Mammary epithelial cell (primary cell): ENCODE measurements at regions of chr17 and their contacts with region 1.

Region 1: GRCh38 chr17:49031965-49032928 is 35.1 kb downstream of the IGF2BP1 start:
- DNase-seq: peak; percentile 59
- H3K4me3 ChIP-seq: no peak overlapping the region
- H3K27ac ChIP-seq: no peak overlapping the region
- H3K4me1 ChIP-seq: peaks cover 11% of the 10 kb centered on the region
- H3K27me3 ChIP-seq: no peaks in the 10 kb centered on the region
- CTCF ChIP-seq: peak; percentile 87 to 90

Region 2: DNA sequence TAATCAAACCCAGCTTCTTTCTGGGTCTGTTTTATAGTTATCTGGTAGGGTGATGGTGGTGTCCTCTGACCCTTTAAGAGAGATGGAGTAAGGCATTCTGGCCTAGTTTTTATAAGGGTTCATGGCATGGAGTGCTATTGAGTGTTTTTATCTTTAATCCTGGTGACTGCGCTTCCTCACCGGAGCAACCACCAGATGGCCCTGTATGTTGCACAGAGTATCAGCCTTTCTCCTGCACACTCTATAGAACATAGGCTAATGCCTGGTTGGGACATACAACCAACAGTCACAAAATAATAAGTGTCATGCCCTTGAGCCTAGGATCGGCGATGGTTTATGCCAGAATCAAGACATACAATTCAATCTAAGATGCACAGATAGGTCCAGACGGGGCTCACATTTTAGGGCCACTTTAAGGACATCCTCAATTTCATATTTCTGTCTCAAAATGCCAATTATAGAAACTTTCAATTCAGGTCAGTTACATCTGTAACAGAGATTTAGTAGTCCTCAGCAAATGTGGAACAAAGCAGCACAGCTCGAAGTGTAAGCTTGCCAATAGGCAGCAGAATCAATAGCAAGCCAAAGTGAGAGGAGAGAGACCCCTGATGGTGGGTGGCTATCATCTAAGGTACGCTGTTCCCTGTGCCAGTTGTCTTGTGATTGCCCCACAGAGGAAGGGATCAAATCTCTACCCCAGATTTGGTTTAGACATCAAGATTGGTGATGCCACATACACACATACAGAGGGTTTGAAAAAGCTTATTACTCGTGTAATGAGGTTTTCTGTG is 368.9 kb before region 1 on chr17:
- CTCF ChIA-PET with region 1: no interaction called
- dilution Hi-C with region 1: loop called (anchors 5 kb)
- in situ Hi-C with region 1: no loop called
- intact Hi-C with region 1: no loop called
- DNase-seq: no peak
- H3K4me3 ChIP-seq: no peak overlapping the region
- H3K27ac ChIP-seq: no peak overlapping the region
- H3K4me1 ChIP-seq: no peaks in the 10 kb centered on the region
- H3K27me3 ChIP-seq: no peaks in the 10 kb centered on the region
- CTCF ChIP-seq: no peak

Region 3: DNA sequence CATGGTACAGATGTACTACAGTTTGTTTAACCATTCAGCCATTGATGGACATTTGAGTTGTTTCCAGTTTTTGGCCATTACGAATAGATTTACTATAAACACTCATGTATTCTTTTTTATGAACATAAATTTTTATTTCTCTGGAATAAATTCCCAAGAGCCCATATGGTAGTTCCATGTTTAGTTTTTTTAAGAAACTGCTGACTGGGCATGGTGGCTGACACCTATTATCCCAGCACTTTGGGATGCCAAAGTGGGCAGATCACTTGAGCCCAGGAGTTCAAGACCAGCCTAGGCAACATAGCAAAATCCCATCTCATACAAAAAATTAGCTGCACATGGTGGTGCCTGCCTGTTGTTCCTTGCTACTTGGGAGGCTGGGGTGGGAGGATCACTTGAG is 340.2 kb before region 1 on chr17:
- CTCF ChIA-PET with region 1: interaction called, 19 read pairs
- dilution Hi-C with region 1: no loop called
- in situ Hi-C with region 1: no loop called
- intact Hi-C with region 1: no loop called
- DNase-seq: no peak
- H3K4me3 ChIP-seq: no peak overlapping the region
- H3K27ac ChIP-seq: no peak overlapping the region
- H3K4me1 ChIP-seq: no peaks in the 10 kb centered on the region
- H3K27me3 ChIP-seq: no peaks in the 10 kb centered on the region
- CTCF ChIP-seq: no peak

Region 4: GRCh38 chr17:48816774-48817590 is 215.3 kb before region 1 on chr17 and contains the start of gene TTLL6:
- CTCF ChIA-PET with region 1: interaction called, 4 read pairs
- dilution Hi-C with region 1: loop called (anchors 5 kb)
- in situ Hi-C with region 1: loop called (anchors 10 kb)
- intact Hi-C with region 1: loop called (anchors 1 kb)
- DNase-seq: peak; percentile 84
- H3K4me3 ChIP-seq: peak within 1 kb of the TSS; percentile 16 to 48 (median 36)
- H3K27ac ChIP-seq: no peak within 1 kb of the TSS
- H3K4me1 ChIP-seq: peaks cover 6% of the 10 kb centered on the region
- H3K27me3 ChIP-seq: peaks cover 3% of the 10 kb centered on the region
- CTCF ChIP-seq: no peak
- total RNA-seq, gene TTLL6: not detected

Region 5: DNA sequence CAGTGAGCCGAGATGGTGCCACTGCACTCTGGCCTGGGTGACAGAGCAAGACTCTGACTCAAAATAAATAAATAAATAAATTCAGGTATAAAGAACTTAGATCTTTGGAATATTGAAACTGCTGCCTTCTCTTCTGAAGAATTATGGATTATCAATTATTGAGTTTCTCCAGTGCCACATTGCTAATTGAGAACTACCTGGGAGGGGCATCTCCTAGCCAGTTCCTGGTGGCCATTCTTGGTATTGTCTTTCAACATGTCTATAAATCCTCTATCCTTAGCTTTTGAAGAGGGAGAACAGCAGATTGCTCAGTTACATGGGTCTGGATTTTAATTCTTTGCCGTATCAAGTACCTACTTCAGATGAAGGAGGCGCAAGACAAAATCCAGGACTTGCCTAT is 172.2 kb before region 1 on chr17:
- CTCF ChIA-PET with region 1: no interaction called
- dilution Hi-C with region 1: no loop called
- in situ Hi-C with region 1: no loop called
- intact Hi-C with region 1: no loop called
- DNase-seq: no peak
- H3K4me3 ChIP-seq: no peak overlapping the region
- H3K27ac ChIP-seq: no peak overlapping the region
- H3K4me1 ChIP-seq: no peaks in the 10 kb centered on the region
- H3K27me3 ChIP-seq: no peaks in the 10 kb centered on the region
- CTCF ChIP-seq: peak; percentile 9 to 16

Region 6: DNA sequence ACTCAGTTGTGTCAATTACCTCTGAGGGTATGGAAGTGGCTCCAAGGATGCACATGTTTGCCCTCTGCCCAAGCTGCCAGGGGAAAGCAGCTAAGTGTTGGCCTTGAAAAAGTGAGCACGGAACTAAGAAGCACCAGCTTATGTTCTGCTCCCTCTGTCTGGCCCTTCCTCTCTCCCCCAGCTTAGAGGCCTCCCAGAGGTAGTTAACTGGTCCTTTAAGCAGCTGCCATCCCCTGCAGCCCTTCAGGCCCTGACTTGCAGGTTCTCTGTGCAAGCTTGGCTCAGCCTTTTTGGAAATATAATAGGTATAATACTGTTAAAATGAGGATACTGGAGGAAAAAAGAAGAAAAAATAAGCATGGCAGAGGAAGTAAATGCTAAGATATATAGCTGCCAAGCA is 131.0 kb before region 1 on chr17:
- CTCF ChIA-PET with region 1: no interaction called
- dilution Hi-C with region 1: loop called (anchors 5 kb)
- in situ Hi-C with region 1: loop called in 1 of 2 experiments (anchors 25 kb)
- intact Hi-C with region 1: no loop called
- DNase-seq: no peak
- H3K4me3 ChIP-seq: no peak overlapping the region
- H3K27ac ChIP-seq: no peak overlapping the region
- H3K4me1 ChIP-seq: peaks cover 5% of the 10 kb centered on the region
- H3K27me3 ChIP-seq: no peaks in the 10 kb centered on the region
- CTCF ChIP-seq: no peak

Region 7: GRCh38 chr17:49016788-49017463 is 15.3 kb before region 1 on chr17:
- CTCF ChIA-PET with region 1: interaction called, 5 read pairs
- dilution Hi-C with region 1: no loop called
- in situ Hi-C with region 1: no loop called
- intact Hi-C with region 1: loop called (anchors 1 kb)
- DNase-seq: peak; percentile 55
- H3K4me3 ChIP-seq: no peak overlapping the region
- H3K27ac ChIP-seq: no peak overlapping the region
- H3K4me1 ChIP-seq: peaks cover 7% of the 10 kb centered on the region
- H3K27me3 ChIP-seq: peaks cover 35% of the 10 kb centered on the region
- CTCF ChIP-seq: no peak

Region 8: DNA sequence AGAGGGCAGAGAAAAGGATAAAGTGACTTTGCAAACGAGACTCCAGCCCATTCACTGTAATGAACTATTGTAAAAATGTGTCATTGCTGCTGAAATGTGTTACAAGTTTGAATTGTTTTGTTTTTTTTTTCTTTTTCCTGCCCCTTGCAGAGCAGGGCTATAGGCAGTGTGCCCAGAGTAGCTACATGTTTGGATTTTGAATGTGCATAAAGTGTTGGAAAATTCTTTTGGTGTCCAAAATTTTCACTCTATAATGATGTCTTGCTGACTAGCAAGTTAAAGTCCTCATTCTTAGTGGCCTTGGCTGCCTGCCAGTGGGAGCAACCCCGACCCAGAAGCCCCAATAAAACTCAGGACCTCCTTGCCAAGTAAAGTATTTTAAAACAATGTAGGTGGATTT is 31.4 kb after region 1 on chr17:
- CTCF ChIA-PET with region 1: no interaction called
- dilution Hi-C with region 1: no loop called
- in situ Hi-C with region 1: no loop called
- intact Hi-C with region 1: no loop called
- DNase-seq: no peak
- H3K4me3 ChIP-seq: no peak overlapping the region
- H3K27ac ChIP-seq: no peak overlapping the region
- H3K4me1 ChIP-seq: no peaks in the 10 kb centered on the region
- H3K27me3 ChIP-seq: no peaks in the 10 kb centered on the region
- CTCF ChIP-seq: no peak

Region 9: GRCh38 chr17:49390548-49391324 is 358.5 kb after region 1 on chr17:
- CTCF ChIA-PET with region 1: no interaction called
- dilution Hi-C with region 1: no loop called
- in situ Hi-C with region 1: no loop called
- intact Hi-C with region 1: loop called (anchors 10 kb)
- DNase-seq: no peak
- H3K4me3 ChIP-seq: no peak overlapping the region
- H3K27ac ChIP-seq: no peak overlapping the region
- H3K4me1 ChIP-seq: no peaks in the 10 kb centered on the region
- H3K27me3 ChIP-seq: no peaks in the 10 kb centered on the region
- CTCF ChIP-seq: no peak